ENCODE measurements at regions of chr14 and their contacts with region 1.

Region 1: GRCh38 chr14:92585981-92586937 is 72.7 kb downstream of the RIN3 start:
- DNase-seq: peak in 7 of 9 experiments; percentile 26 to 90 (median 62)
- ATAC-seq: peak; percentile 75
- H3K4me3 ChIP-seq: peak overlapping the region; percentile 9 to 38
- H3K4me3 Mint-ChIP-seq: peak overlapping the region; percentile 74
- H3K27ac ChIP-seq: peak overlapping the region; percentile 22 to 85
- H3K27ac Mint-ChIP-seq: peak overlapping the region; percentile 95
- H3K4me1 ChIP-seq: peaks cover 98% of the 10 kb centered on the region
- H3K4me1 Mint-ChIP-seq: peaks cover 97% of the 10 kb centered on the region
- H3K27me3 ChIP-seq: no peaks in the 10 kb centered on the region
- H3K27me3 Mint-ChIP-seq: no peaks in the 10 kb centered on the region
- CTCF ChIP-seq: no peak

Region 2: GRCh38 chr14:92531106-92531873 is 55.0 kb before region 1 on chr14:
- CTCF ChIA-PET with region 1: no interaction called
- POLR2A ChIA-PET with region 1: interaction called, 5 read pairs
- intact Hi-C with region 1: loop called (anchors 1 kb)
- DNase-seq: peak; percentile 65 to 98 (median 84)
- ATAC-seq: peak; percentile 85
- H3K4me3 ChIP-seq: peak overlapping the region in 1 of 2 experiments; percentile 15
- H3K4me3 Mint-ChIP-seq: peak overlapping the region; percentile 67
- H3K27ac ChIP-seq: peak overlapping the region; percentile 55 to 97
- H3K27ac Mint-ChIP-seq: peak overlapping the region; percentile 99
- H3K4me1 ChIP-seq: peaks cover 65% of the 10 kb centered on the region
- H3K4me1 Mint-ChIP-seq: peaks cover 75% of the 10 kb centered on the region
- H3K27me3 ChIP-seq: no peaks in the 10 kb centered on the region
- H3K27me3 Mint-ChIP-seq: no peaks in the 10 kb centered on the region
- CTCF ChIP-seq: no peak

Region 3: GRCh38 chr14:92556255-92556741 is 30.0 kb before region 1 on chr14:
- CTCF ChIA-PET with region 1: interaction called, 3 read pairs
- POLR2A ChIA-PET with region 1: interaction called, 5 read pairs
- intact Hi-C with region 1: loop called (anchors 1 to 5 kb)
- DNase-seq: no peak
- ATAC-seq: peak; percentile 27
- H3K4me3 ChIP-seq: no peak overlapping the region
- H3K4me3 Mint-ChIP-seq: peak overlapping the region; percentile 23
- H3K27ac ChIP-seq: peak overlapping the region in 1 of 2 experiments; percentile 25
- H3K27ac Mint-ChIP-seq: peak overlapping the region; percentile 85
- H3K4me1 ChIP-seq: peaks cover 72% of the 10 kb centered on the region
- H3K4me1 Mint-ChIP-seq: peaks cover 85% of the 10 kb centered on the region
- H3K27me3 ChIP-seq: no peaks in the 10 kb centered on the region
- H3K27me3 Mint-ChIP-seq: no peaks in the 10 kb centered on the region
- CTCF ChIP-seq: no peak

Region 4: DNA sequence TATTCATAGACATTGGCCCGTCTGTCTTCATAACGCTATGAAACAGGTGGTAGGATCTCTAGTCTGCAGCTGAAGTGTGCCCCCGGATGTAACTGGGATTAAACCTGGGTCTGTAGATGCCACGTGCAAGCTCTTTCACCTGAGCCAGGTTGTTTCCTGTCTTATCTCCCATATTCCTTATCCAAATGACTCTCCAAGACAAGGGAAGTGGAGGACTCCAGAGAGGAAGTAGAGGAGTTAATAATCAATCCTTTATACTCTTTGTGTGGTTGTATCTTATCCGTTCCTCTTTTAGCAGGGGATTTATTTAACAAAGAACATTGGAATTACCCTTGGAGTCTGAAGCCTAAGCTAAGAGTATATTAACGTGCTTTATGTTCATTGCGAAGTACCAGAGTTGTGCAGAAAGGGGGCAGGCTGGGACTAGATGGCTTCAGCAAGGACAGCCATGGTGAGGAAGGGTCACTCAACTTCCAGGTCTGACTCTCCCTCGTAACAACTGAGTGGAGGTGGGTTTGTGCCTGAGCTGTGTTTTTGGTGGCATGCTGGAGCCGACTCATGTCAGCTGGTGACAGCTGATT is 10.2 kb after region 1 on chr14:
- CTCF ChIA-PET with region 1: interaction called, 7 read pairs
- POLR2A ChIA-PET with region 1: interaction called, 20 read pairs
- intact Hi-C with region 1: no loop called
- DNase-seq: peak in 1 of 9 experiments; percentile 35
- ATAC-seq: no peak
- H3K4me3 ChIP-seq: no peak overlapping the region
- H3K4me3 Mint-ChIP-seq: no peak overlapping the region
- H3K27ac ChIP-seq: no peak overlapping the region
- H3K27ac Mint-ChIP-seq: no peak overlapping the region
- H3K4me1 ChIP-seq: peaks cover 15% of the 10 kb centered on the region
- H3K4me1 Mint-ChIP-seq: peaks cover 39% of the 10 kb centered on the region
- H3K27me3 ChIP-seq: no peaks in the 10 kb centered on the region
- H3K27me3 Mint-ChIP-seq: no peaks in the 10 kb centered on the region
- CTCF ChIP-seq: no peak

Region 5: DNA sequence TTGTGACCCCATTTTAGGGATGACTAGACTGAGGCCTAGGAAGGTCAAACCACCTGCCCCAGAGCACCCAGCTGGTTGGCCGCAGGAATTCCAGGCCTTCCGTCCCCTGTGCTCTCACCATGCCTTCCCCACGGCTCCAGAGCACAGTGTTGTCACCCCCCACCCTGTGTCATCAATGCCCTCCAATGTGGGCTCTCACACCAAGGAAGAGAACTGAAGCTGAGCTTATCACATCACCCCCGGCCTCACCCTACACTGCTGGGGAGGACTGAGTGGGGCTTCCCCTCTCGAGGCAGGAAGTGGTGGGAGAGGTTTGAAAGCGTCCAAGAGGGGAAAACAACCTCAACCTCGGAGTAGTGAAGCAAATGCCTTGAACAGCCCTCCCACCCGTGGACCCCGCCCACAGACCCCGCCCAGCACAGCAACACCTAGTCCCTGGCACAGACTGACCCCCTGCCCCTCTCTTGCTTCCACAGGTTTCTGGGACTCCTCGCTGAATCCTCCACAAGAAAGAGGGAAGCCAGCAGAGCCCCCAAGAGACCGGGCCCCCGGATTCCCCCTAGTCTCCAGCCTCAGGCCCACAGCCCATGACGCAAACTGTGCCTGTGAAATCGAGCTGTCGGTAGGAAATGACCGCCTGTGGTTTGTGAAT is 65.0 kb after region 1 on chr14:
- CTCF ChIA-PET with region 1: interaction called, 3 read pairs
- POLR2A ChIA-PET with region 1: interaction called, 13 read pairs
- intact Hi-C with region 1: loop called in 1 of 2 experiments (anchors 1 kb)
- DNase-seq: peak; percentile 56 to 96 (median 84)
- ATAC-seq: peak; percentile 82
- H3K4me3 ChIP-seq: peak overlapping the region; percentile 77 to 91
- H3K4me3 Mint-ChIP-seq: peak overlapping the region; percentile 98
- H3K27ac ChIP-seq: peak overlapping the region; percentile 77 to 95
- H3K27ac Mint-ChIP-seq: peak overlapping the region; percentile 100
- H3K4me1 ChIP-seq: peaks cover 61% of the 10 kb centered on the region
- H3K4me1 Mint-ChIP-seq: peaks cover 76% of the 10 kb centered on the region
- H3K27me3 ChIP-seq: no peaks in the 10 kb centered on the region
- H3K27me3 Mint-ChIP-seq: no peaks in the 10 kb centered on the region
- CTCF ChIP-seq: no peak

Region 6: DNA sequence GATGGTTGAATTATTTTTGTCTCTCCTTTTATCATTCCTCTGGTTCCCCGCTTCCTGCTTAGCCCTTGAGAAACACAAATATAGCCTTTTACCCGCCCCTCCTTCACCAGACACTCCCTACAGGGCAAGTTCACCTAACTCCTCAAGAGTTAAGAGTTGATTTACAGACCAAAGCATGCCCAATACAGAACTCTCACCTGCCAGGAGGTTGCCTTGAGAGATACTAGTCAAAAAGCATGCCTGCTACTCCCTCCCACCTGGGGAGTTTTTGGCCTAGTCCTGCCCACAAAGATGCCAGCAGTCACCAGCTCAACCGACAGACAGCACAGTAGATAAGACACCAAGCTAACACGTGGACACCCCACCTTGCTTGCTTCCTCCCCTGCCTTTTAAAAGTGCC is 150.9 kb after region 1 on chr14:
- CTCF ChIA-PET with region 1: no interaction called
- POLR2A ChIA-PET with region 1: no interaction called
- intact Hi-C with region 1: no loop called
- DNase-seq: peak in 4 of 9 experiments; percentile 33 to 60 (median 43)
- ATAC-seq: peak; percentile 94
- H3K4me3 ChIP-seq: no peak overlapping the region
- H3K4me3 Mint-ChIP-seq: peak overlapping the region; percentile 51
- H3K27ac ChIP-seq: peak overlapping the region in 1 of 2 experiments; percentile 25
- H3K27ac Mint-ChIP-seq: peak overlapping the region; percentile 83
- H3K4me1 ChIP-seq: peaks cover 17% of the 10 kb centered on the region
- H3K4me1 Mint-ChIP-seq: peaks cover 14% of the 10 kb centered on the region
- H3K27me3 ChIP-seq: no peaks in the 10 kb centered on the region
- H3K27me3 Mint-ChIP-seq: no peaks in the 10 kb centered on the region
- CTCF ChIP-seq: no peak

Region 7: DNA sequence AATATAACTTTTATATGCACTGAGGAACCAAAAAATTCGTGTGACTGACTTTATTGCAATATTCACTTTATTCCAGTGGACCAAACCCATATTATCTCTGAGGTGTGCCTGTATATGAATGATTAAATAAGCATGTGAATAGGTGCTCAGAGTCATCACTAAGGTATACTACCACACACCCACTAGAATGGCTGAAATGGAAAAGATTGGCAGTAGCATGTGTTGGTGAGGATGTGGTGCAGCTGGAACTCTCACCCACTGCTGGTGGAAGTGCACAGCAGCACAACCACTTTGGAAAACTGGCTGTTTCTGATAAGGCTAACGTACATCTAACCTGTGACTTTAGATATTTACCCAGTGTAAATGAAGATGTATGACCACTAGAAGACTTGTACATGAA is 244.6 kb after region 1 on chr14:
- CTCF ChIA-PET with region 1: no interaction called
- POLR2A ChIA-PET with region 1: no interaction called
- intact Hi-C with region 1: no loop called
- DNase-seq: no peak
- ATAC-seq: no peak
- H3K4me3 ChIP-seq: no peak overlapping the region
- H3K4me3 Mint-ChIP-seq: no peak overlapping the region
- H3K27ac ChIP-seq: no peak overlapping the region
- H3K27ac Mint-ChIP-seq: no peak overlapping the region
- H3K4me1 ChIP-seq: no peaks in the 10 kb centered on the region
- H3K4me1 Mint-ChIP-seq: no peaks in the 10 kb centered on the region
- H3K27me3 ChIP-seq: no peaks in the 10 kb centered on the region
- H3K27me3 Mint-ChIP-seq: no peaks in the 10 kb centered on the region
- CTCF ChIP-seq: no peak